Head of caudate nucleus (tissue), 42 donors: ENCODE measurements at regions of chr5 and their contacts with region 1.

Region 1: GRCh38 chr5:138178516-138179276 is at the starts of genes BRD8 and KIF20A:
- DNase-seq: peak; percentile 88 to 99 (median 97)

Region 2: GRCh38 chr5:138213161-138214029 is 34.7 kb after region 1 on chr5 and contains the start of gene CDC23:
- intact Hi-C with region 1: loop called (anchors 5 kb)
- DNase-seq: peak; percentile 88 to 98 (median 94)